CD8-positive, alpha-beta T cell (primary cell): ENCODE measurements at regions of chr4 and their contacts with region 1.

Region 1: GRCh38 chr4:150561143-150561737 is 20.7 kb upstream of the MAB21L2 start:
- DNase-seq: no peak
- ATAC-seq: no peak
- H3K4me3 ChIP-seq: no peak overlapping the region
- H3K4me3 Mint-ChIP-seq: no peak overlapping the region
- H3K27ac ChIP-seq: no peak overlapping the region
- H3K27ac Mint-ChIP-seq: no peak overlapping the region
- H3K4me1 ChIP-seq: no peaks in the 10 kb centered on the region
- H3K4me1 Mint-ChIP-seq: no peaks in the 10 kb centered on the region
- H3K27me3 ChIP-seq: no peaks in the 10 kb centered on the region
- H3K27me3 Mint-ChIP-seq: no peaks in the 10 kb centered on the region
- CTCF ChIP-seq: no peak

Region 2: GRCh38 chr4:150038335-150039076 is 522.7 kb before region 1 on chr4:
- CTCF ChIA-PET with region 1: no interaction called
- POLR2A ChIA-PET with region 1: no interaction called
- intact Hi-C with region 1: loop called in 1 of 2 experiments (anchors 5 kb)
- DNase-seq: peak in 1 of 9 experiments; percentile 1
- ATAC-seq: no peak
- H3K4me3 ChIP-seq: no peak overlapping the region
- H3K4me3 Mint-ChIP-seq: no peak overlapping the region
- H3K27ac ChIP-seq: no peak overlapping the region
- H3K27ac Mint-ChIP-seq: no peak overlapping the region
- H3K4me1 ChIP-seq: no peaks in the 10 kb centered on the region
- H3K4me1 Mint-ChIP-seq: no peaks in the 10 kb centered on the region
- H3K27me3 ChIP-seq: no peaks in the 10 kb centered on the region
- H3K27me3 Mint-ChIP-seq: peaks cover 8% of the 10 kb centered on the region
- CTCF ChIP-seq: no peak

Region 3: GRCh38 chr4:151933122-151933827 is 1372.0 kb after region 1 on chr4:
- CTCF ChIA-PET with region 1: no interaction called
- POLR2A ChIA-PET with region 1: no interaction called
- intact Hi-C with region 1: no loop called
- DNase-seq: no peak
- ATAC-seq: no peak
- H3K4me3 ChIP-seq: no peak overlapping the region
- H3K4me3 Mint-ChIP-seq: no peak overlapping the region
- H3K27ac ChIP-seq: no peak overlapping the region
- H3K27ac Mint-ChIP-seq: no peak overlapping the region
- H3K4me1 ChIP-seq: no peaks in the 10 kb centered on the region
- H3K4me1 Mint-ChIP-seq: peaks cover 9% of the 10 kb centered on the region
- H3K27me3 ChIP-seq: no peaks in the 10 kb centered on the region
- H3K27me3 Mint-ChIP-seq: no peaks in the 10 kb centered on the region
- CTCF ChIP-seq: no peak